ENCODE measurements at regions of chr9 and their contacts with region 1.

Region 1: DNA sequence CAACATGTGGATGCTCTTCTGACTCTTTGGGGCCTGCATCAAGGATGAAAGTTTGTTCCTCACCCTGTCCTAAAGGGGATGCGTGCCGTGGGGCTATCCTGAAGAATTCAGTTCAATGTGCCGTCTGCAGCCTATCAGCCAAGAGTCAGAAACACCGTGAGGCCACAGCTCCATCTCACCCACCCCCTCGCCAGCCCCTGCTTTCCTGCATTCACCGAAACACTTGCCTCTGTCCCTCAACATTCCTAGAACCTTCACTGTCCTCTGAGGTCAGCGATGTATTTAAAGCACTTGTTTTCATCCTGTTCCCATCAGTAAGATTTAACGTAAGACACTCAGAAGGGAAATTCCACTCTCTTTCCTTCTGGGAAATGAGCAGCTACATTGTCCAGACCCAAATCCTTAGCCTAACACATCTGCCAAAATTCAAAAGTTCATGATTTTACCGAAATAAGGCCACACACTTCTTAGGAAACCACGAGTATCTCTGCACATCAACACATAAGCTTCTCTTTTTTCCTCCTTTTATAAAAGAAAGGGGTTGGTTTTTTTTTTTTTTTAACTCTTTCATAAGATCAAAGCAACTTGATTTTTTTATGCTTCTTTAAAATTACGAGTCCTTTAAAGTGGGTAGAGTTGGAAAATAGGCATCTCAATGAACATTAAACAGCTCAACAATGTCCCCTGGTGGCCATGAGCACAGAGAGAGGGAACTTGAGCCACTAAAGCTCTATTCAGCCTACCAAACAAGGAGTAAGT is 100.7 kb downstream of the SUSD1 start:
- DNase-seq: peak; percentile 49 to 86 (median 66)
- ATAC-seq: peak; percentile 91
- H3K4me3 ChIP-seq: no peak overlapping the region
- H3K4me3 Mint-ChIP-seq: peak overlapping the region; percentile 17
- H3K27ac ChIP-seq: no peak overlapping the region
- H3K27ac Mint-ChIP-seq: peak overlapping the region; percentile 16
- H3K4me1 ChIP-seq: peaks cover 26% of the 10 kb centered on the region
- H3K4me1 Mint-ChIP-seq: peaks cover 33% of the 10 kb centered on the region
- H3K27me3 ChIP-seq: no peaks in the 10 kb centered on the region
- H3K27me3 Mint-ChIP-seq: no peaks in the 10 kb centered on the region
- CTCF ChIP-seq: peak; percentile 96

Region 2: GRCh38 chr9:111483862-111484571 is 590.4 kb before region 1 on chr9 and contains the start of gene ECPAS:
- CTCF ChIA-PET with region 1: no interaction called
- POLR2A ChIA-PET with region 1: no interaction called
- intact Hi-C with region 1: loop called in 1 of 2 experiments (anchors 10 kb)
- DNase-seq: peak; percentile 27 to 83 (median 48)
- ATAC-seq: peak; percentile 60
- H3K4me3 ChIP-seq: peak within 1 kb of the TSS; percentile 95
- H3K4me3 Mint-ChIP-seq: peak within 1 kb of the TSS; percentile 86
- H3K27ac ChIP-seq: peak within 1 kb of the TSS; percentile 62 to 78
- H3K27ac Mint-ChIP-seq: peak within 1 kb of the TSS; percentile 83
- H3K4me1 ChIP-seq: peaks cover 12% of the 10 kb centered on the region
- H3K4me1 Mint-ChIP-seq: peaks cover 26% of the 10 kb centered on the region
- H3K27me3 ChIP-seq: no peaks in the 10 kb centered on the region
- H3K27me3 Mint-ChIP-seq: no peaks in the 10 kb centered on the region
- CTCF ChIP-seq: no peak
- total RNA-seq, gene ECPAS: 36.6 to 37.5 TPM

Region 3: GRCh38 chr9:111631071-111631971 is 443.1 kb before region 1 on chr9 and contains the start of gene DNAJC25:
- CTCF ChIA-PET with region 1: no interaction called
- POLR2A ChIA-PET with region 1: no interaction called
- intact Hi-C with region 1: loop called in 1 of 2 experiments (anchors 5 kb)
- DNase-seq: peak; percentile 91 to 100 (median 96)
- ATAC-seq: peak; percentile 92
- H3K4me3 ChIP-seq: peak within 1 kb of the TSS; percentile 74
- H3K4me3 Mint-ChIP-seq: peak within 1 kb of the TSS; percentile 99
- H3K27ac ChIP-seq: peak within 1 kb of the TSS; percentile 3 to 75
- H3K27ac Mint-ChIP-seq: peak within 1 kb of the TSS; percentile 90
- H3K4me1 ChIP-seq: peaks cover 18% of the 10 kb centered on the region
- H3K4me1 Mint-ChIP-seq: peaks cover 58% of the 10 kb centered on the region
- H3K27me3 ChIP-seq: no peaks in the 10 kb centered on the region
- H3K27me3 Mint-ChIP-seq: no peaks in the 10 kb centered on the region
- CTCF ChIP-seq: no peak
- total RNA-seq, gene DNAJC25: 4.5 to 4.8 TPM

Region 4: DNA sequence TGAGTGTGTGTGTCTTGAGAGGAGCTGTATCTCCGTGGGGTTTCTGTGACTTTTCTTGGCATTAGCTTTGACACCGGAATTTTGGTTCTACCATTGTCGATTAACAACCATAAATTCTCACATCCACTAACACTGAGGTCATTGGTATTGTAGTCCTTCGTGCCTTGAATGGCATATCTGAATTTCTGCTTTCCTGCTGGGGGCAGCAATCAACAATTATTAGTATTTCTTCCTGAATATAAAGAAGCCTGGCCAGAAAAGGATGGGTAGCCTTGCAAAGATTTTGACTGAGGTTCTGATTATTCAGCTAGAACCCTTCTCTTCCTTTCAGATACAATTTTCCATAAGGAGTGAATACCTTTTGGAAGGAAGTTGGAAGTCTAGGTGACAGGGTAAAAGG is 246.2 kb before region 1 on chr9:
- CTCF ChIA-PET with region 1: no interaction called
- POLR2A ChIA-PET with region 1: interaction called, 4 read pairs
- intact Hi-C with region 1: loop called (anchors 1 to 2 kb)
- DNase-seq: peak in 4 of 14 experiments; percentile 16 to 52 (median 37)
- ATAC-seq: no peak
- H3K4me3 ChIP-seq: no peak overlapping the region
- H3K4me3 Mint-ChIP-seq: no peak overlapping the region
- H3K27ac ChIP-seq: no peak overlapping the region
- H3K27ac Mint-ChIP-seq: no peak overlapping the region
- H3K4me1 ChIP-seq: no peaks in the 10 kb centered on the region
- H3K4me1 Mint-ChIP-seq: no peaks in the 10 kb centered on the region
- H3K27me3 ChIP-seq: no peaks in the 10 kb centered on the region
- H3K27me3 Mint-ChIP-seq: no peaks in the 10 kb centered on the region
- CTCF ChIP-seq: peak; percentile 41

Region 5: GRCh38 chr9:111866976-111867375 is 207.5 kb before region 1 on chr9:
- CTCF ChIA-PET with region 1: no interaction called
- POLR2A ChIA-PET with region 1: no interaction called
- intact Hi-C with region 1: no loop called
- DNase-seq: peak in 6 of 14 experiments; percentile 1 to 70 (median 22)
- ATAC-seq: peak; percentile 78
- H3K4me3 ChIP-seq: no peak overlapping the region
- H3K4me3 Mint-ChIP-seq: peak overlapping the region; percentile 5
- H3K27ac ChIP-seq: no peak overlapping the region
- H3K27ac Mint-ChIP-seq: no peak overlapping the region
- H3K4me1 ChIP-seq: peaks cover 4% of the 10 kb centered on the region
- H3K4me1 Mint-ChIP-seq: peaks cover 5% of the 10 kb centered on the region
- H3K27me3 ChIP-seq: no peaks in the 10 kb centered on the region
- H3K27me3 Mint-ChIP-seq: no peaks in the 10 kb centered on the region
- CTCF ChIP-seq: no peak

Region 6: GRCh38 chr9:111926421-111926875 is 148.0 kb before region 1 on chr9:
- CTCF ChIA-PET with region 1: interaction called, 5 read pairs
- POLR2A ChIA-PET with region 1: interaction called, 3 read pairs
- intact Hi-C with region 1: loop called in 1 of 2 experiments (anchors 5 kb)
- DNase-seq: peak; percentile 29 to 89 (median 52)
- ATAC-seq: peak; percentile 95
- H3K4me3 ChIP-seq: no peak overlapping the region
- H3K4me3 Mint-ChIP-seq: peak overlapping the region; percentile 82
- H3K27ac ChIP-seq: peak overlapping the region in 1 of 2 donors; percentile 46
- H3K27ac Mint-ChIP-seq: peak overlapping the region; percentile 87
- H3K4me1 ChIP-seq: peaks cover 27% of the 10 kb centered on the region
- H3K4me1 Mint-ChIP-seq: peaks cover 57% of the 10 kb centered on the region
- H3K27me3 ChIP-seq: no peaks in the 10 kb centered on the region
- H3K27me3 Mint-ChIP-seq: no peaks in the 10 kb centered on the region
- CTCF ChIP-seq: no peak

Region 7: GRCh38 chr9:112012026-112012902 is 62.2 kb before region 1 on chr9:
- CTCF ChIA-PET with region 1: no interaction called
- POLR2A ChIA-PET with region 1: no interaction called
- intact Hi-C with region 1: loop called in 1 of 2 experiments (anchors 10 kb)
- DNase-seq: peak in 2 of 14 experiments; percentile 24 to 26
- ATAC-seq: no peak
- H3K4me3 ChIP-seq: no peak overlapping the region
- H3K4me3 Mint-ChIP-seq: no peak overlapping the region
- H3K27ac ChIP-seq: no peak overlapping the region
- H3K27ac Mint-ChIP-seq: no peak overlapping the region
- H3K4me1 ChIP-seq: peaks cover 9% of the 10 kb centered on the region
- H3K4me1 Mint-ChIP-seq: peaks cover 17% of the 10 kb centered on the region
- H3K27me3 ChIP-seq: no peaks in the 10 kb centered on the region
- H3K27me3 Mint-ChIP-seq: no peaks in the 10 kb centered on the region
- CTCF ChIP-seq: no peak

Region 8: DNA sequence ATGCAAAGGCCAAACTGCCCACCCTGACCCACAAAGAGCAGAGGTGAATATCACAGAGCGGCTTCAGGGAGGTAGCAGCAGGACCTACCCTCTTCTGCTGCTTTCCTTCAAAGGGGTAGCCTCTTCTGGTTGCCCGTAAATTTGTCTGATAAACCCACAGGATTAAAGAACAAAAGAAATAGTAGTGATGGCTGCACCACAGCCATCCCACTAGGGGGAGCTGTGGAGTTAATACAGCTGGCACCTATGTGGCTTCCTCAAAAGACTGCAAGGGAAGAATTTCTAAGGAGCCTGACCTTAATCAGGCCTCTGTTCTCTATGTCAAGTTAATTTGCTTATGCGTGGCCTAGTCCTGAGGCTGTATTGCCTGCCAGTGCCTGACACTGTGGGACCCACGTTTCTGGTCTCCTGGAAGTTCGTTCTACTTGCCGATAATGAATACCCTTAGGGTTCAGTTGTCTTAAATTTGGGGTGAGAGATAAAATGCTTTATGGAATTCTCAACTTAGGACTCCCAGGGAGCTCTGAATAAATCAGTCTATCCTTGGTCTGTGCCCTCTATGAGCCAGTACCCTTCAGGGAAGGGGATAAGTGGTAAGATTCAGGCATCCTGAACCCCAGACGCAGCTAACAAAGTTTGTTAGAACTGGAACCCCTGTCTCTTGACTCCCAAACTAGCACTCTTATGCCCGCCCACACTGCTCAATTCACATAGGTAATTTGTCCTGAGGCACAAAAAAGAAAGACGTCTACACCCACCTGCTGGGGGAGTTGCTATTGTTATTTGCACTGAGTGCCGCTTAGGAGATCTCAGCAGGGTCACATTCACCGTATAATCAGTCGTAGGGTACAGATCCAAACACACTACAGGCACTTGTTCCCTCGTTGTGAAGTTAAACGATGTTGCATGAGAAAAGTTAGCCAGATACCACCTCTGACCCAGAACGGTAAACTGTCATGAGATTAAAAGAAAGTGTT is 23.6 kb after region 1 on chr9:
- CTCF ChIA-PET with region 1: interaction called, 3 read pairs
- POLR2A ChIA-PET with region 1: no interaction called
- intact Hi-C with region 1: loop called in 1 of 2 experiments (anchors 2 kb)
- DNase-seq: peak; percentile 47 to 87 (median 56)
- ATAC-seq: peak; percentile 93
- H3K4me3 ChIP-seq: no peak overlapping the region
- H3K4me3 Mint-ChIP-seq: no peak overlapping the region
- H3K27ac ChIP-seq: no peak overlapping the region
- H3K27ac Mint-ChIP-seq: no peak overlapping the region
- H3K4me1 ChIP-seq: peaks cover 19% of the 10 kb centered on the region
- H3K4me1 Mint-ChIP-seq: peaks cover 23% of the 10 kb centered on the region
- H3K27me3 ChIP-seq: no peaks in the 10 kb centered on the region
- H3K27me3 Mint-ChIP-seq: no peaks in the 10 kb centered on the region
- CTCF ChIP-seq: peak; percentile 81